A673 (cell line): ENCODE measurements at regions of chr22 and their contacts with region 1.

Region 1: GRCh38 chr22:19291580-19292457 is at the start of gene CLTCL1:
- DNase-seq: peak; percentile 80
- H3K4me3 ChIP-seq: peak within 1 kb of the TSS; percentile 79
- H3K27ac ChIP-seq: peak within 1 kb of the TSS; percentile 64
- H3K4me1 ChIP-seq: peaks cover 8% of the 10 kb centered on the region
- H3K27me3 ChIP-seq: no peaks in the 10 kb centered on the region
- CTCF ChIP-seq: no peak
- total RNA-seq, gene CLTCL1: 7.5 and 11.5 TPM in 2 replicates

Region 2: GRCh38 chr22:19130959-19131684 is 160.7 kb before region 1 on chr22 and contains the start of gene TSSK2:
- CTCF ChIA-PET with region 1: no interaction called
- POLR2A ChIA-PET with region 1: no interaction called
- intact Hi-C with region 1: no loop called
- DNase-seq: no peak
- H3K4me3 ChIP-seq: no peak within 1 kb of the TSS
- H3K27ac ChIP-seq: no peak within 1 kb of the TSS
- H3K4me1 ChIP-seq: no peaks in the 10 kb centered on the region
- H3K27me3 ChIP-seq: no peaks in the 10 kb centered on the region
- CTCF ChIP-seq: no peak
- total RNA-seq, gene TSSK2: not detected in 2 replicates

Region 3: GRCh38 chr22:19178656-19179496 is 112.9 kb before region 1 on chr22 and contains the start of gene SLC25A1:
- CTCF ChIA-PET with region 1: interaction called, 3 read pairs
- POLR2A ChIA-PET with region 1: no interaction called
- intact Hi-C with region 1: loop called (anchors 5 kb)
- DNase-seq: peak; percentile 93
- H3K4me3 ChIP-seq: peak within 1 kb of the TSS; percentile 87
- H3K27ac ChIP-seq: peak within 1 kb of the TSS; percentile 81
- H3K4me1 ChIP-seq: peaks cover 32% of the 10 kb centered on the region
- H3K27me3 ChIP-seq: no peaks in the 10 kb centered on the region
- CTCF ChIP-seq: no peak
- total RNA-seq, gene SLC25A1: 91.0 and 115 TPM in 2 replicates

Region 4: DNA sequence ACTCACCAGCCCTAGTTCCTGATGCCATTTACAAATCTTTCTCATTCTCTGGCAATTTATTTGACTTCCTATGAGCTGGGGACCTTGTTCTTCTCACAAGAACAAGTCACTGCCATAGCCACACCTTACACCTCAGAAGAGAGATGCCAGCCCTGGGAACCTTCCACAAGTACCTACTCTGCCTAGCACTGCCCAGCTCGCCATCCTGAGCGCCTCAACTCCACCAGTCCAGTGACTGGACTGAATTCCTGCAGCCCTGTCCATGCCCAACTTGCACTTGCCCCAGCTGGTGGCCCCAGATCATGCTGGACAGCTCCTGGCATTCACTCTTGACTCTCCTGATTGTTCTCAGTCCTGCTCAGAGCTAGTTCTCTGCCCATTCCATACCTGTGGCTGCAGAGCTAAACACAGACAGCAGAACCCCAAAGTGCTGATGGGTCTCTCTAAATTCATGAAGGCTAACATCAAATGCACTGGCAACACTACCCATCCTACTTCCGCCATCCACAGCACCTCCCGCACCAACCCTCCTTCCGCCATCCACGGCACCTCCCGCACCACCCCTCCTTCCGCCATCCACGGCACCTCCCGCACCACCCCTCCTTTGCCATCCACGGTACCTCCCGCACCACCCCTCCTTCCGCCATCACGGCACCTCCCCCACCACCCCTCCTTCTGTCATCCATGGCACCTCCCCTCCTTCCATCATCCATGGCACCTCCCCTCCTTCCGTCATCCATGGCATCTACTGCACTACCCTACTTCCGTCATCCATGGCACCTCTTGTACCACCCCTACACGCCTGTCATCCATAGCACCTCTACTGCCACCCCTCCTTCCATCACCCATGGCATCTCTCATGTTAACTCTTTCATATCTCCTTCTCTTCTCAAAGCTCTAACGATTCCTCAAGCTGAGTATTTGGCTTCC is 89.7 kb before region 1 on chr22:
- CTCF ChIA-PET with region 1: no interaction called
- POLR2A ChIA-PET with region 1: no interaction called
- intact Hi-C with region 1: loop called (anchors 10 kb)
- DNase-seq: no peak
- H3K4me3 ChIP-seq: no peak overlapping the region
- H3K27ac ChIP-seq: no peak overlapping the region
- H3K4me1 ChIP-seq: no peaks in the 10 kb centered on the region
- H3K27me3 ChIP-seq: no peaks in the 10 kb centered on the region
- CTCF ChIP-seq: no peak

Region 5: DNA sequence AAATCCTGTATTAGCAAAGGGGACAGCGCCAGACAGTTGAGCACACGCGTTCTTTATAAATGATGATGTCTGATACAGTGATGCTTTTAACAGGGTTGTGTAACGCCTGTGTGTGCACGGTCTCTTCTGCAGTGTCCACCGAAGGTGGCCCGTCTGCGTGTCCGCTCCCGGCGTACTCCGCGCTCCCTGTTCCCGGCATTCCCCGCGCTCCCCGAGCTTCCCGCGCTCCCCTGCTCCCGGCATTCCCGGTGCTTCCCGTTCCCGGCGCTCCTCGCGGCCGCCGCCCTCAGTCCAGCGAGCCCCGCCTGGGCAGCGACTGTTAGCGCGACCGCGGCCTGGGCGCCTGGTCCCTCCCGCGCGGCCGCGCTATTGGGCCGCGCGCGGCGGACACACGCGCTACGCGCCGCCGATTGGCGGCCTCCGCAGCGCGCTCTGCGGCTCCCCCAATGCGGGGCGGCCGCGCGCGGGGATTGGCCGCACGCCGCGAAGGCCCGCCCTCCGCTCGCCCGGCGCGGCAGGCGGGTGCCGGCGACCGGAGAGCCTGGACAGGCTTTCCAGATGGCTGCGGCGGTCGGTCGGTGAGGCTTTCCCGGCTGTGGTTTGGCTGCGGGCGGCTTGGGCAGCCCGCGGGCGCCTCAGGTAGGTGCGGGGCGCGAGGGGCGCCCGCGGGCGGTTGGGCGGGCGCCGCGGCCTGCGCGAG is 788.1 kb after region 1 on chr22 and contains the start of gene DGCR8:
- CTCF ChIA-PET with region 1: interaction called, 16 read pairs
- POLR2A ChIA-PET with region 1: no interaction called
- intact Hi-C with region 1: no loop called
- DNase-seq: peak; percentile 96
- H3K4me3 ChIP-seq: peak within 1 kb of the TSS; percentile 77
- H3K27ac ChIP-seq: peak within 1 kb of the TSS; percentile 89
- H3K4me1 ChIP-seq: no peaks in the 10 kb centered on the region
- H3K27me3 ChIP-seq: no peaks in the 10 kb centered on the region
- CTCF ChIP-seq: no peak
- total RNA-seq, gene DGCR8: 63.2 and 74.8 TPM in 2 replicates

Region 6: GRCh38 chr22:20130739-20131596 is 839.1 kb after region 1 on chr22:
- CTCF ChIA-PET with region 1: no interaction called
- POLR2A ChIA-PET with region 1: no interaction called
- intact Hi-C with region 1: no loop called
- DNase-seq: peak; percentile 82
- H3K4me3 ChIP-seq: peak overlapping the region; percentile 88
- H3K27ac ChIP-seq: peak overlapping the region; percentile 87
- H3K4me1 ChIP-seq: peaks cover 5% of the 10 kb centered on the region
- H3K27me3 ChIP-seq: no peaks in the 10 kb centered on the region
- CTCF ChIP-seq: no peak